ENCODE measurements at regions of chr6 and their contacts with region 1.

Region 1: GRCh38 chr6:20126789-20127653 is 85.2 kb downstream of the MBOAT1 start:
- DNase-seq: peak; percentile 73
- ATAC-seq: peak; percentile 80
- H3K4me3 Mint-ChIP-seq: no peak overlapping the region
- H3K27ac Mint-ChIP-seq: no peak overlapping the region
- H3K4me1 Mint-ChIP-seq: peaks cover 4% of the 10 kb centered on the region
- H3K27me3 Mint-ChIP-seq: no peaks in the 10 kb centered on the region
- CTCF ChIP-seq: peak; percentile 87

Region 2: DNA sequence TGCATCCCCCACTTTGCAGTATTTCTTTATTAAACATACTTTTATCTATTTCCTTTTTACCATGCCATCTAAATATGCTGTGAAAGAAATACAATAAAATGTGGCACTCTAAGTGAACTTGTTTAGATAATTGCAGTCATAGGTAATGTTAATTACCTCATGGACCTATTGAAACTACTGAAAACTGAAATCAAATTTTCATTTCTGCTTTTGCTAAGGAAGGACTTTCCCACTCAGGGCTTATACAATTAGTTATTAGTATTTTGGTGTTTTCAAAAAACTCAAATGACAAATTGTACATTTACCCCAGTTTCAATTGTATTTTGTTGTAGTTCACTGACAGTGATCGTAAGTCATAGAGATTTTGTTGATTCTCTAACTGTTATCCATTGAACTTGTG is 201.5 kb before region 1 on chr6:
- CTCF ChIA-PET with region 1: no interaction called
- POLR2A ChIA-PET with region 1: no interaction called
- intact Hi-C with region 1: no loop called
- DNase-seq: no peak
- ATAC-seq: no peak
- H3K4me3 Mint-ChIP-seq: no peak overlapping the region
- H3K27ac Mint-ChIP-seq: no peak overlapping the region
- H3K4me1 Mint-ChIP-seq: no peaks in the 10 kb centered on the region
- H3K27me3 Mint-ChIP-seq: peaks cover 8% of the 10 kb centered on the region
- CTCF ChIP-seq: no peak

Region 3: DNA sequence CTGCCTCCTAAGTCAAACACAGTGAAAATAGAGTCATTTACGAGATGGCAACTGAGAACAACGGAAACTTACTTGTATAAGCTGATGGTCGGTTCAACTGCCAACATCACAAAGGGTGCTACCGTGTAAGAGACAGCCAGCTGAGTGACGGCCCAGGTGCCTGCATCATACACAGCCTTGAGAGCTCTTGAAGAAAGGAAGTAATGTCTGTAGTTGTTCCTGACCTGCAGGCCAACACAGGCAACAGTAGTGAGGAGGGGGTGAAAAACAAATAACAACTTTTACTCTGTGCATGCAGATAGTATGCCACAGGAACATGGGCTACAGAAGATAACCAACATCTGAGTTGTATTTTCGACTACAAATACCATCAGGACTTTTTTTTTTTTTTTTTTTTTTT is 17.5 kb before region 1 on chr6:
- CTCF ChIA-PET with region 1: interaction called, 15 read pairs
- POLR2A ChIA-PET with region 1: interaction called, 4 read pairs
- intact Hi-C with region 1: no loop called
- DNase-seq: no peak
- ATAC-seq: no peak
- H3K4me3 Mint-ChIP-seq: no peak overlapping the region
- H3K27ac Mint-ChIP-seq: no peak overlapping the region
- H3K4me1 Mint-ChIP-seq: no peaks in the 10 kb centered on the region
- H3K27me3 Mint-ChIP-seq: no peaks in the 10 kb centered on the region
- CTCF ChIP-seq: no peak

Measured in activated CD8-positive, alpha-beta T cell treated with anti-CD3 and anti-CD28 coated beads for 36 hours (primary cell).